ENCODE measurements at regions of chr2 and their contacts with region 1.

Region 1: DNA sequence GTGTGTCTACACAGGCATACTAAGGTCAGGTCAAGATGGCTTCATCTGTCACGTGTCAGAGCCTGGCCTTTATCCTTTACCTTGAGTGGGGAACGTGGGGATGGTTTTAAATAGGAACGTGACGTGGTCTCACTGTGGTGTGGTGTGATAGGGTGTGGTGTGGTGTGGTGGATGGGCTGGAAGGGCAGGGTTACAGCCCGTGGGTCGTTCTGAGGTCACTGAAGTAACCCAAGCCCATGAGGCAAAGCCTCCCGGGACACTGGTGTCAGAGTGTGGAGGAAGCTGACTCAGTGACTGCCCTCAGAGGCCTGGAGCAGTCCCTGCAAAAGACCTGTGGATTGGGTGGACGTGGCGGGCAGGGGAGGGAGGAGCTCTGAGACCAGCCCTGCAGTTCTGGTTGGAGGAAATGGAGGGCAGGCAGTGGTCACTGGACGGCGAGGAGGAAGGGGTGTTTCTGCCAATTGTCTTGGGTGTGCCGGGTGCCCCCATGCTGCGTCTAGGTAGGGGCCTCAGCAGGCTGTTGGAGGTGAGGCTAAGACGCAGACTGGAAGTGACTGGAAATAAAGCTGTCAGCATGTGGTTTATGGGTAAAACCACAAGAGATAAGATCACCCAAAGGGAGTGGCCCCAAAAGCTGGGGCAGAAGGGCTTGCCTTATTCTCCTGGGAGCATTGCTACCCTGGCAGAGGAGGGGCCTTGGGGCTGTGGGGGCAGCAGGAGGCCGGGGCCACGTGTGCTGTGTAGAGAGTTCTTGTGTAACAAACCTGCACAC is 84.8 kb downstream of the SH3RF3 start:
- DNase-seq: peak; percentile 94
- H3K4me3 Mint-ChIP-seq: peak overlapping the region; percentile 74
- H3K27ac Mint-ChIP-seq: peak overlapping the region; percentile 84
- H3K4me1 Mint-ChIP-seq: peaks cover 79% of the 10 kb centered on the region
- H3K27me3 Mint-ChIP-seq: peaks cover 55% of the 10 kb centered on the region

Region 2: GRCh38 chr2:108621087-108621559 is 592.7 kb before region 1 on chr2:
- intact Hi-C with region 1: loop called (anchors 10 kb)
- DNase-seq: peak; percentile 93
- H3K4me3 Mint-ChIP-seq: peak overlapping the region; percentile 88
- H3K27ac Mint-ChIP-seq: peak overlapping the region; percentile 97
- H3K4me1 Mint-ChIP-seq: peaks cover 68% of the 10 kb centered on the region
- H3K27me3 Mint-ChIP-seq: no peaks in the 10 kb centered on the region

Region 3: DNA sequence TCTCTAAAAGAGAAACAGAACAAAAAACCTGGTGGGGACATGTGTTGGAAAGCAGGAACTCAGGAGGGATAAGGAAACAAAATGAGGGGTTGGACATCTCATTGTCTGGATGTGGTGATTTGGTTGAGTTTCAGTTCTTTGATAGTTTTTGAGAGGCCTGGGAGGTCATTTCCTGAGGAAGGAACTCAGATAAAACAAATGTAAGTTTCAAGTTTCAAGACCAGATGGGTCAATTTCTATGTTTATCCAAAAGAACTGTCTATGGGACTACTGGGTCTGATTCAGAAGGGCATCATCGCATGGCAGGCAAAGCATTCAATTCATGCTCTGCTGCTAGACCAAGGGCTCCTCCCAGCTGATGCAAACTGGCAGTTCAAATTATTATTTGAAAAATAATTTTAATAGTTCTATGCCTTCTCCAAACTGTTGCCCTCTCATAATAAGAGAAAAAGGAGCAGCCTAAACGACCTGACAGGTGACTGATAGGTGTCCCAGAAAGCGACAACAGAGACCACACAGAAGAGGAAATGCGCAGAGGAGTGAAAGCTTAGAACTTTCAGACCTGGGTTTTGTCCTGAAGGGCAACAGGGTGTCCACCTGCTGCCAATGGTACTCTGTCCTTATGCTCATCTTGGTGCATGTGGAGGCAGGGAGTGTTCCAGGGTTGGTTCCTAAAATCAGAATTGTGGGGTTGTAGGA is 124.1 kb before region 1 on chr2:
- intact Hi-C with region 1: no loop called
- DNase-seq: no peak
- H3K4me3 Mint-ChIP-seq: no peak overlapping the region
- H3K27ac Mint-ChIP-seq: no peak overlapping the region
- H3K4me1 Mint-ChIP-seq: no peaks in the 10 kb centered on the region
- H3K27me3 Mint-ChIP-seq: no peaks in the 10 kb centered on the region

Region 4: GRCh38 chr2:109128048-109128465 is 85.8 kb before region 1 on chr2:
- intact Hi-C with region 1: loop called (anchors 2 kb)
- DNase-seq: peak; percentile 87
- H3K4me3 Mint-ChIP-seq: peak overlapping the region; percentile 73
- H3K27ac Mint-ChIP-seq: no peak overlapping the region
- H3K4me1 Mint-ChIP-seq: peaks cover 22% of the 10 kb centered on the region
- H3K27me3 Mint-ChIP-seq: peaks cover 49% of the 10 kb centered on the region

Region 5: GRCh38 chr2:109264595-109265328 is 50.9 kb after region 1 on chr2:
- intact Hi-C with region 1: no loop called
- DNase-seq: no peak
- H3K4me3 Mint-ChIP-seq: no peak overlapping the region
- H3K27ac Mint-ChIP-seq: no peak overlapping the region
- H3K4me1 Mint-ChIP-seq: peaks cover 6% of the 10 kb centered on the region
- H3K27me3 Mint-ChIP-seq: peaks cover 6% of the 10 kb centered on the region

Region 6: GRCh38 chr2:109331896-109332848 is 118.3 kb after region 1 on chr2:
- intact Hi-C with region 1: loop called (anchors 1 kb)
- DNase-seq: peak; percentile 75
- H3K4me3 Mint-ChIP-seq: peak overlapping the region; percentile 83
- H3K27ac Mint-ChIP-seq: peak overlapping the region; percentile 26
- H3K4me1 Mint-ChIP-seq: peaks cover 31% of the 10 kb centered on the region
- H3K27me3 Mint-ChIP-seq: peaks cover 28% of the 10 kb centered on the region

Region 7: DNA sequence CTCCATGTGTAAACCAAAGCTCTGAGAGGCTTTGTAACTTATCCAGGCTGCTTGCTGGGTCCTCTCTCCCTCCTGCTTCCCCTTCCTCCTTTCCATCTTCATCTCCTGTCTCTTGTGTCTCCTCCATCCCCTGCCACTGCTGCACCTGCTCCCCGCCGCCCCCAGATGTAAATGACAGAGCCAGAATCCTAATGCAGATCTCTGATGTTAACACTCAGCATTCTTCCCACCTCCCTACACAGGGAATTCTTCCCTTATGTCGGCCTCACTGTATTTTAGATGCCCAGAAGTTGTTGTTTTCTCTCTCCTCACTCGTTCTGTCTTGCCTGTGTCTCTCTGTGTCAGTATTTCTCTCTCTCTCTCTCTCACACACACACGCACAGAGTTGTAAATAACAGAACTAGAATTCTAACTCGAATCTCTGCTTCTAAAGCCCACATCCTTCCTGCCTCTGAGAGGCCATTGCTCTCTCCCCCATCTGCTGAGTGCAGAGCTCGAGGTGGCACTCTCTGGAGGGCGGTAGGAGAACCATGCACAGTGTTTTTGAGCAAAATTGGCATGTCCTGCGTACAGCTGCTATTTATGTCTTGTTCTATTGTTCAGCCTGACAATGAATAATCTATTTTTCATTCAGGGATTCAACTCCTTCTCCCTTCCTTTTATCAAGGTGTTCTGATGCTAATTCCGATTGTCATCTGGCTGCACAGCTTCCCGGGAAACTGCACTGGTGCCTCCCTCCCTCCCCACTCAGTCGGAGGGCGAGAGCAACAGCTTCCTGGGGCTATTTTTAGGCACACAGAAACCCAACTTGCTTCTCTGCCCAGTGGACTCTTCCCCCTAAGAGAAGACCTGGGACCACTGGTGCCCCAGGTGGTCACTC is 135.1 kb after region 1 on chr2:
- intact Hi-C with region 1: loop called (anchors 2 kb)
- DNase-seq: peak; percentile 82
- H3K4me3 Mint-ChIP-seq: peak overlapping the region; percentile 52
- H3K27ac Mint-ChIP-seq: peak overlapping the region; percentile 7
- H3K4me1 Mint-ChIP-seq: peaks cover 13% of the 10 kb centered on the region
- H3K27me3 Mint-ChIP-seq: peaks cover 9% of the 10 kb centered on the region

Measured in activated CD4-positive, alpha-beta T cell treated with anti-CD3 and anti-CD28 coated beads, Interleukin-2, amount 10 ng/mL, durations not matched to agents 24 days and 14 days (primary cell).